Transverse colon (tissue), 4 donors: ENCODE measurements at regions of chr1 and their contacts with region 1.

Region 1: GRCh38 chr1:201970334-201971159 is 11.9 kb upstream of the RNPEP start:
- DNase-seq: no peak
- H3K4me3 ChIP-seq: no peak overlapping the region
- H3K27ac ChIP-seq: no peak overlapping the region
- H3K4me1 ChIP-seq: peaks cover 0 to 6% (median 2%) of the 10 kb centered on the region in 4 donors
- H3K27me3 ChIP-seq: no peaks in the 10 kb centered on the region
- CTCF ChIP-seq: no peak
- EP300 ChIP-seq: no peak
- POLR2A ChIP-seq: no peak

Region 2: DNA sequence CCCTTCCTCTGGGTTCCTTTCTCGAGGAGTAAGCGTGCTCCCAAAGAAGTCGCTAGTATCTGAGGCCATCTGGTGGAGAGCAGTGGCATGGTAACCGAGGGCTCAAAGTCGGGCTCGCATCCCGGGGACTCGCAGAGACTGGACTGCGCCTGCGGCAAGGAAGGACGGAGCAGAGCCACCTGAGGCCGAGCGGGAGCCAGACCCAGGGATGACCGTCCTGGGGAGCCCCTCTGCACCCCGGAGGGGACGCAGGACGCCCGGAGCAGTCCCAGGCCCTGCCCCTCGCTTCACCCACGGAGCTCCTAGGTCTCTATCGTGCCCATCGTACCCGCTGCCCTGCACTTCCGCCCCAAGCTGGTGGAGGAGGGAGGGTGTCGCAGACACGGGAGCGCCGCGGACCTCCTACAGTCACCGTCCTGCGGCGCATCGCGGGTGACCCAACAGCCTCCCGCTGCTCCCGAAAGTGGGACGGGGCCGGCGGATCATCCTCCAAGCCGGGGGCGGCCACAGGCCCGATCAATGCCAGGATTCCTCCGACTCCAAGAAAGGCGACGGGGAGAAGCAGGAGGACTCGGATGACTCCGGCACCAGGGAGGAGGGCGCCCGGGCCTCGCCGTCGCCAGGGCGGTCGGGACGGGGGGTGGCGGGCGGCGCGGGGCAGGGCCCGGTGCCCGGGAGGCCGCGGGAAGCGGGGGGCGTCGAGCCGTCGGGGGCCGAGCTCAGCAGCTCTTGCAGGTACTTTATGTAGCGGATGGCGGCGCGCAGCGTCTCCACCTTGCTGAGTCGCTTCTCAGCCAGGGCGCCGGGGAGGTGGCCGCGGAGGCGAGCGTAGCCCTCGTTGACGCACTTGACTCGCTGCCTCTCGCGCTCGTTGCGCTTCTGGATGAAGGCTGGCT is 856.1 kb before region 1 on chr1:
- in situ Hi-C with region 1: no loop called
- intact Hi-C with region 1: no loop called
- DNase-seq: peak; percentile 89
- H3K4me3 ChIP-seq: peak overlapping the region; percentile 34 to 65 (median 52)
- H3K27ac ChIP-seq: peak overlapping the region in 3 of 4 donors; percentile 2 to 58 (median 38)
- H3K4me1 ChIP-seq: peaks cover 0 to 11% (median 7%) of the 10 kb centered on the region in 4 donors
- H3K27me3 ChIP-seq: peaks cover 4% of the 10 kb centered on the region
- CTCF ChIP-seq: peak; percentile 79 to 92 (median 83)
- EP300 ChIP-seq: no peak
- POLR2A ChIP-seq: peak; percentile 56

Region 3: GRCh38 chr1:201364511-201365105 is 605.9 kb before region 1 on chr1:
- in situ Hi-C with region 1: no loop called
- intact Hi-C with region 1: no loop called
- DNase-seq: no peak
- H3K4me3 ChIP-seq: no peak overlapping the region
- H3K27ac ChIP-seq: no peak overlapping the region
- H3K4me1 ChIP-seq: no peaks in the 10 kb centered on the region
- H3K27me3 ChIP-seq: peaks cover 7% of the 10 kb centered on the region
- CTCF ChIP-seq: no peak
- EP300 ChIP-seq: no peak
- POLR2A ChIP-seq: no peak

Region 4: GRCh38 chr1:201828820-201829774 is 141.4 kb before region 1 on chr1 and contains the start of gene IPO9:
- in situ Hi-C with region 1: no loop called
- intact Hi-C with region 1: no loop called
- DNase-seq: peak; percentile 97
- H3K4me3 ChIP-seq: peak within 1 kb of the TSS; percentile 65 to 92 (median 87)
- H3K27ac ChIP-seq: peak within 1 kb of the TSS; percentile 92 to 96 (median 94)
- H3K4me1 ChIP-seq: peaks cover 11 to 42% (median 19%) of the 10 kb centered on the region in 4 donors
- H3K27me3 ChIP-seq: no peaks in the 10 kb centered on the region
- CTCF ChIP-seq: peak; percentile 90 to 97 (median 96)
- EP300 ChIP-seq: no peak
- POLR2A ChIP-seq: peak; percentile 71
- total RNA-seq, gene IPO9: 2.0 to 13.0 (median 7.9) TPM

Region 5: DNA sequence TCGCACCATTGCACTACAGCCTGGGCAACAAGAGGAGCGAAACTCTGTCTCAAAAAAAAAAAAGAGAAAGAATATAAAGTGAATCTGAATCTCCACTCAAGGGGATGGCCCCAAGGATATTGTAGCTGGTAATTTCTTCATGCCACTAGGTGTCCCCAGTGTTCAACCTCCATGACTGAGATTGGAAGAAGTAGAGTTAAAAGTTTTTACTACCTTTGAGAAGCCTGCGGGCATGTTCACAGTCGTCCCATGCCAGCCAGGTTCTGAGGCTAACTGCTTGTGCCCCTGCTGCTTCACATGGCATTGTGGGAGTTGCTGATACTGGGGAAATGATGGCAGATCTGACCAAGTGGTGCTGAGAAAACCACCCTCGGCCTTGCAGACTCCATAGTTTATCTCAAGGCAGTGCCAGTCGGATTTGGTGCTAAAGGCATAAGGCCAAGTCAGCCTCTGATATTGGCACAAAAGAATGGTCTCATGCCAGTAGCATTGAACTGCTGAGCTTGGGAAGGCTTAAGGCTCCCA is 92.6 kb before region 1 on chr1:
- in situ Hi-C with region 1: no loop called
- intact Hi-C with region 1: loop called (anchors 2 kb)
- DNase-seq: no peak
- H3K4me3 ChIP-seq: no peak overlapping the region
- H3K27ac ChIP-seq: no peak overlapping the region
- H3K4me1 ChIP-seq: peaks cover 0 to 9% (median 0%) of the 10 kb centered on the region in 4 donors
- H3K27me3 ChIP-seq: no peaks in the 10 kb centered on the region
- CTCF ChIP-seq: peak; percentile 60 to 71 (median 64)
- EP300 ChIP-seq: no peak
- POLR2A ChIP-seq: no peak

Region 6: DNA sequence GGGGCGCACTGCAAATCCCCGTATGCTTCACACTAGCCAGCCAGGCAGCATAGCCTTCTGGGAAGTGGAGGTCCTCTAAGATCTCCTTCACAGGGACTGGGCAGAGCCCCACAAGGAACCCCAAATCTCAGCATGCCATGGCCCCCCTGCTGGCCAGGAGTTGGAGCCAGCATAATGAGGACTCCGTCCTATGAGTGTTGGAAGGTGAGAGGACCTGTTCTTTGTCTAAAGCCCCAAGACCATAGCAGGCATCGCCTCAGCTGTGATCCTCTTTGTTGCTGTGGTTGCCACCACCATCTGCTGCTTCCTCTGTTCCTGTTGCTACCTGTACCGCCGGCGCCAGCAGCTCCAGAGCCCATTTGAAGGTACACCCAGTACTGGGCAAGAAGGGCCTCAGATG is 80.3 kb before region 1 on chr1:
- in situ Hi-C with region 1: loop called in 3 of 4 experiments (anchors 5 to 10 kb)
- intact Hi-C with region 1: loop called (anchors 5 kb)
- DNase-seq: no peak
- H3K4me3 ChIP-seq: no peak overlapping the region
- H3K27ac ChIP-seq: peak overlapping the region in 2 of 4 donors; percentile 6 to 70
- H3K4me1 ChIP-seq: peaks cover 12 to 19% (median 16%) of the 10 kb centered on the region in 4 donors
- H3K27me3 ChIP-seq: peaks cover 25% of the 10 kb centered on the region
- CTCF ChIP-seq: no peak
- EP300 ChIP-seq: no peak
- POLR2A ChIP-seq: no peak

Region 7: DNA sequence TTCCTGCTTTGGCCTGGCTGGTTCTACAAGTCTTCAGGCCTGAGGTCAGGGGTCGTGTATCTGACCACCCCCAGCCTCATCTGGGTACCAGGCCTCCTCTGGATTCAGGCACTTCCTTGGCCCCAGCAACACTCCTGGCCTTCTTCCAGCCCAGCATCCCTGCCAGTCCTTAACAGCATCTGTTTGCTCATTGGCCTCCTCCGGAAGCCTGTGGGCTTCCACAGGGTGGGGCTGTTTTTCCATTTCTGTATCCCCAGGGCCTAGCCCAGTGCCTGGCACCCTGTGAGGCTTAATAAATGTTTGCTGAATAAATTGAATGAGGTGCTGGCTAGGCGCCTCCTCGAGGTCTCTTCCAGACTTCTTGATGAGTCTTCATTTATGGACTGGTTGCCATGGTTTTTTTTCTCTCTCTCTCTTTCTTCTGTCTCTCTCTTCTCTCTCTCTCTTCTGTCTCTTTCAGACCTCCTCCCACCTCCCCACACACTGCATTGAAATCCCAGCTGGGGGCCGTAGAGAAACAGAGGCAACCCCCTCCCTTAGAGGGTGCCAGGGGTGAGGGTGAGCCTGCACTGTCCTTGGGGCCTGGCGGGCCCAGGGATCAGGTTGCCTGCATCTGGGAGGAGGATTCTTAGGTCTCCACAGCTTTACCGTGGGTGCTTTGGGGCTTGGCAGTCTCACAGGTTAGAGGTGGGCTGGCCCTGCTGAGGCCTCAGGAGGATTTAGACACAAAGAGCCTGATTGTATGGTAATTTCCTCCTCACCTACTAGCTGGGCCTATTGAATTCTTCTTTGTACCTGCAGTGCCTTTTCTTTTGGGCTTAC is 130.8 kb after region 1 on chr1:
- in situ Hi-C with region 1: no loop called
- intact Hi-C with region 1: no loop called
- DNase-seq: no peak
- H3K4me3 ChIP-seq: no peak overlapping the region
- H3K27ac ChIP-seq: peak overlapping the region in 1 of 4 donors; percentile 30
- H3K4me1 ChIP-seq: peaks cover 0 to 26% (median 18%) of the 10 kb centered on the region in 4 donors
- H3K27me3 ChIP-seq: no peaks in the 10 kb centered on the region
- CTCF ChIP-seq: no peak
- EP300 ChIP-seq: no peak
- POLR2A ChIP-seq: no peak